Ascending aorta (tissue), 2 donors: ENCODE measurements at regions of chr10 and their contacts with region 1.

Region 1: DNA sequence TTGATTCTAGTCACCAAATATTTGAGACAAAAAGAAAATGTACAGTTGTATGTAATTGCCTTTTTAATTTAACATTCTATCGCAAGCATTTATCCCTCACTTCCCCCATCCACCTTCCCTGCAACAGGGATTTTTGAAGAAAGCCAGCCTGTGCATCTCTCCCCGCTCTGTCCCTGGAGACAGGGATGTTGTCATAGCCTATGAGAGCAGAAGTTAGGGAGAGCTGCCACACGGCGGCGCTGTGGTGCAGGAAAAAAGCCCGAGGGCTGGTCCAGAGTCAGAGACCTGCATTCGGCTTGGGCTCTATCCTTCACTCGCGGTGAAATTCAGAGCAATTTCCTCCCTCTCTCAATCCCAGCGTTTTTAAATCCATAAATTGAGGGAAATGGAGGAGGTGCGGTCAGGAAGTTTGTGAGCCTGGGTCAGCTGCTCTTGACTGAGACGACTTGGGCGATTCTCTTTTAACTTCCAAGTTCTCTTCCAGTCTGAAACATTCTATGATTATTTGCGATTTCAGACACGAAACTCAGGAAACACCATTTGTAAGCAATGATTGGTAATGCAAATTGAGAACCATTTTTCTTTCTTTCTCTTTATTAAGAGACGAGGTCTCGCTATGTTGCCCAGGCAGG is 17.5 kb downstream of the HKDC1 start:
- DNase-seq: peak; percentile 40 to 90
- H3K4me3 ChIP-seq: no peak overlapping the region
- H3K27ac ChIP-seq: no peak overlapping the region
- H3K4me1 ChIP-seq: peaks cover 3 to 13% of the 10 kb centered on the region in 2 donors
- H3K27me3 ChIP-seq: no peaks in the 10 kb centered on the region
- CTCF ChIP-seq: peak; percentile 89 to 95 (median 91)

Region 2: DNA sequence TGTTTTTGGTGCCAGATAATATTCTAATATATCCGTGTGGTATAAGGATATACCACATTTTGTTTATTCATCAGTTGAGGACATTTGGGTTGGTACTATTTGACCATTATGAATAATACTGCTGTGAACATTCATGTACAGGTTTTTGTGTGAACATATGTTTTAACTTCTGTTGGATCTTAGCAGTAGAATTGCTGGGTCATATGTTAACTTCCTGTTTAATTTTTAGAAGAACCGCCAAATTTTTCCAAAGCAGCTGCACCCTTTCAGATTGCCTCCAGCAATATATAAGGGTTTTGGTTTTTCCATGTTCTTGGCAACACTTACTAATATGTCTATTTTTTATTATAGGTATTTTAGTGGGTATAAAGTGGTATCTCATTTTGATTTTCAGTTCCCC is 90.9 kb before region 1 on chr10:
- intact Hi-C with region 1: no loop called
- DNase-seq: no peak
- H3K4me3 ChIP-seq: no peak overlapping the region
- H3K27ac ChIP-seq: no peak overlapping the region
- H3K4me1 ChIP-seq: no peaks in the 10 kb centered on the region
- H3K27me3 ChIP-seq: no peaks in the 10 kb centered on the region
- CTCF ChIP-seq: no peak

Region 3: DNA sequence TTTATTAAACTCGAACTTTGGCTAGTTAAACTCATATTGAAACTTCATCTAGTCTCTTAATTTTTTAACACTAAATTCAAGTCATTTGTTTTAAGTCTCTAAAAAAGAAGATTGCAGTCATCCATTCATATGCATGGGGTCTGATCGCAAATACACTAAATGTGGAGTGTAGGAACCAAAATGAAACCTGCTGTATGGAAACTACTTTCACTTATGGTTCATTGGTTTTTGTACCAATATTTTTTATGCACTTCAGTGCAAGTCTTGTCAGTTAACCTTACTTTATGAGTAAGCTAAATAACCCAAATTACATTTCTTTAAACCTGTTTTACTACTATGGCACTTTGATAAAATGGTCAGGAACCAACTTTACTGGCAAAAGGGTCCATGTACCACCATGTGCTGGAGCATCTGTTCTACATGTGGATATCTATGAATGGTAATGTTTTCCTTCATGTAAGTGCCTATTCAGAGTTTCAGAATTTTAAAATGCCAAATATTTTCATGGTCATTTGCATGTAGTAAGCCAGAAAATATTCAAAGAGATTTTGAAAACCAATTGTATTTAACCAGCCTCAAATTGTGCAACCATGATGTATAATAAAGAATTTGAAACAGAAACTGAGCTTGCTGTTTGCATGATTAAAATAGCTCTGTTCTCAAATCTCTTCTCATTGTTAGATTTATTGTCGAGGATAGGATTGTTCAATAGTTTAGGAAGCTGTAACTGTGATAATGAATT is 65.2 kb before region 1 on chr10:
- intact Hi-C with region 1: no loop called
- DNase-seq: no peak
- H3K4me3 ChIP-seq: no peak overlapping the region
- H3K27ac ChIP-seq: no peak overlapping the region
- H3K4me1 ChIP-seq: no peaks in the 10 kb centered on the region
- H3K27me3 ChIP-seq: no peaks in the 10 kb centered on the region
- CTCF ChIP-seq: no peak

Region 4: DNA sequence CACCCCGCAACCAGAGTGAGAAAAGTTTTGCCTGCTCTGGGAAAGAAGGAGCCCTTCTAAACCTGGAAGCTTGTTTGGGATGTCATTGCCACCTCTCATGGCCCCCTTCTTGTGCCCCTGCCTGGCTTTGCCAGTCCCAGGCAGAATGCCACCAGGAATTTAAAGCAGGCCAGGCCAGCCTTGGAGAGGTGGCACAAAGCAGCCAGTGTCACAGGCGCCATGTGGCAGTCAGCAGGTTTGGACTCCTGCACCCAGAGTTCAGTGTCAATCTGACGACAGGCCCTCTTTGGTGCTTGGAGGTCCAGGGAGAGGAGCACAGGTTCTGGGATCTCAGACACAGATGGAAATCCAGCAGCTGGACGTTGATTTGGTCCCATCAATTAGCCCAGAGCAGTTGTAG is 53.3 kb after region 1 on chr10:
- intact Hi-C with region 1: no loop called
- DNase-seq: no peak
- H3K4me3 ChIP-seq: no peak overlapping the region
- H3K27ac ChIP-seq: no peak overlapping the region
- H3K4me1 ChIP-seq: no peaks in the 10 kb centered on the region
- H3K27me3 ChIP-seq: no peaks in the 10 kb centered on the region
- CTCF ChIP-seq: no peak

Region 5: DNA sequence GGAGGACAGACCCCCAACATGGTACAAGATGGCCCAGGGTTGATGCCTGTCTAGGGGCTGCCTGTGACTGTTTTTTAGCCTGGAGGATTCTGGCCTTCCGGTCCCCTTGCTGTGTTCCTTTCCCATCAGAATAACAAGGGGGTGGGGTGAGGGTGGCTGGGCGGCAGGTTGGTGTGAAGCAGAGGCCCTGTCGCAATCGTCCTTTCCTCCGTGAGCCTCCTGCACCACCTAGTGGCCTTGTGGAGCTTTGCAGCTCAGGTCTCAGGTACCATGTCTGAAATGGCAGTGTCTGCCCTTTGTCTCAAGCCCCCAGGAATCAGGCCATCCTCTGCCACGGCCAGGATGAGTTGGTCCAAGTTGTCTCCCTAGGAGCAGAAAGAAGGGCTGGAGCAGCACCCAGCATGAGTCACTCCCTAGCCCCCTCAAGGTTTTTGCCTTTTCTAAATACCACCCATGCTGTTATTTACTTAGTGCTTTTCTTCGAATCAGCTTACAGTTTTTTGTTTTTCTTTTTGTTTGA is 154.9 kb after region 1 on chr10:
- intact Hi-C with region 1: loop called (anchors 1 kb)
- DNase-seq: peak; percentile 64 to 93
- H3K4me3 ChIP-seq: no peak overlapping the region
- H3K27ac ChIP-seq: peak overlapping the region; percentile 30 to 52
- H3K4me1 ChIP-seq: peaks cover 0 to 18% of the 10 kb centered on the region in 2 donors
- H3K27me3 ChIP-seq: no peaks in the 10 kb centered on the region
- CTCF ChIP-seq: peak; percentile 93 to 97 (median 96)

Region 6: GRCh38 chr10:69506834-69507721 is 269.4 kb after region 1 on chr10:
- intact Hi-C with region 1: loop called (anchors 2 kb)
- DNase-seq: no peak
- H3K4me3 ChIP-seq: no peak overlapping the region
- H3K27ac ChIP-seq: no peak overlapping the region
- H3K4me1 ChIP-seq: peaks cover 0 to 4% of the 10 kb centered on the region in 2 donors
- H3K27me3 ChIP-seq: no peaks in the 10 kb centered on the region
- CTCF ChIP-seq: no peak